Dorsolateral prefrontal cortex (tissue), 120 donors: ENCODE measurements at regions of chr12 and their contacts with region 1.

Region 1: GRCh38 chr12:54958048-54958658 is 26.4 kb downstream of the TESPA1 start:
- DNase-seq: peak in 4 of 10 donors; percentile 28 to 64 (median 38)
- H3K4me3 ChIP-seq: no peak overlapping the region
- H3K27ac ChIP-seq: peak overlapping the region in 3 of 59 donors; percentile 3 to 17 (median 16)
- H3K27me3 ChIP-seq: peaks cover 0 to 4% (median 0%) of the 10 kb centered on the region in 45 donors
- CTCF ChIP-seq: peak; percentile 67 to 99 (median 86)

Region 2: DNA sequence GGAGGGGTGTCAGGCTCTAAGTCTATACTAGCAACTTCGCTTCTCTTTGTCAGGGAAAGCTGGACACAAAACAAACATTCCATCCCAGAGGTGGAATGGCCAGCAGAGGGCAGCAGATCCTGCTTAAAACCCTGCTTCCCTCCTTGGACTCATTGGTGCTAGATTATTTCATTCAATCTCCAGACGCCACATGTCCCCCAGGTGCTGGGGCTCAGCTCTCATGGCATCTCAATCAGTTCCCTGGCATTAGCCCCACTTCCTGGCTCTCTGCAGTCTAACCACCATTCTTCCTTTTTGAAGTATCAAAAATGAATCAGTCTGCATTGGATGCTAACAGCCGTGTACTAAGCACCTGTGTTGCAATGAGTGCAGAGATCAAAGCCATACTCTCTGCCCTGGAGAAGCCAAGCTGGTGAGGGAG is 361.6 kb before region 1 on chr12:
- intact Hi-C with region 1: loop called in 1 of 2 experiments (anchors 10 kb)
- DNase-seq: peak; percentile 56 to 79 (median 64)
- H3K4me3 ChIP-seq: no peak overlapping the region
- H3K27ac ChIP-seq: no peak overlapping the region
- H3K27me3 ChIP-seq: peaks cover 0 to 6% (median 0%) of the 10 kb centered on the region in 45 donors
- CTCF ChIP-seq: peak; percentile 52 to 88 (median 80)

Region 3: GRCh38 chr12:54701940-54702592 is 256.1 kb before region 1 on chr12:
- intact Hi-C with region 1: loop called in 1 of 2 experiments (anchors 1 kb)
- DNase-seq: no peak
- H3K4me3 ChIP-seq: no peak overlapping the region
- H3K27ac ChIP-seq: no peak overlapping the region
- H3K27me3 ChIP-seq: no peaks in the 10 kb centered on the region
- CTCF ChIP-seq: peak; percentile 26 to 89 (median 72)

Region 4: DNA sequence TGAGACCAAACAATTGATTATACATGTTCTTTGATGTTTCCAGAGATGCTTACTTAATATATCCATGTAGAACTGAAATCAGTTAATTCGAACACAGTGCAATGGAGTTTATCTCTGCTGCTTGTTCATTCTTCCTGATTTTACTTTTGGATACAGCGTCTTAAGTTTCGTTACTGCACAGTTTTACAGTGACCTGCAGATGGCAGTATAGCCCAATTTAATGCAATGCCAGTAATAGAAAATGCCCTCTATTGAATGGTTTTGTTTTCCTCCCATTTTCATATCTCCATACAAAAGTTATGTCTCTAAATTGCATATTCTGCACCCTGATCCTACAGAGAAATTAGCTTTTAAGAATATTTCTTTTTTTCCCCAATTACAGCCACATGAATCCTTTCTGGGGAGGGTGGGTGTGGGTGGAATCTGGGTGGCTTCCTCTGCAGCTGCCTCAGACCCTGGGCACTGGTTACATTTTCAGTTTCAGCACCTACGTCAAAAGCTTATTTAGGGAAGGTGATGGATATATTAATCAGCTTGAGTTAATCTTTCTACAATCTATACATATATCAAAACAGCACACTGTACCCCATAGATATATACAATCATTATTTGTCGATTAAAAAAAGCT is 208.8 kb before region 1 on chr12:
- intact Hi-C with region 1: loop called (anchors 1 to 10 kb)
- DNase-seq: peak in 1 of 10 donors; percentile 5
- H3K4me3 ChIP-seq: no peak overlapping the region
- H3K27ac ChIP-seq: no peak overlapping the region
- H3K27me3 ChIP-seq: peaks cover 0 to 4% (median 0%) of the 10 kb centered on the region in 45 donors
- CTCF ChIP-seq: peak; percentile 70 to 92 (median 82)

Region 5: DNA sequence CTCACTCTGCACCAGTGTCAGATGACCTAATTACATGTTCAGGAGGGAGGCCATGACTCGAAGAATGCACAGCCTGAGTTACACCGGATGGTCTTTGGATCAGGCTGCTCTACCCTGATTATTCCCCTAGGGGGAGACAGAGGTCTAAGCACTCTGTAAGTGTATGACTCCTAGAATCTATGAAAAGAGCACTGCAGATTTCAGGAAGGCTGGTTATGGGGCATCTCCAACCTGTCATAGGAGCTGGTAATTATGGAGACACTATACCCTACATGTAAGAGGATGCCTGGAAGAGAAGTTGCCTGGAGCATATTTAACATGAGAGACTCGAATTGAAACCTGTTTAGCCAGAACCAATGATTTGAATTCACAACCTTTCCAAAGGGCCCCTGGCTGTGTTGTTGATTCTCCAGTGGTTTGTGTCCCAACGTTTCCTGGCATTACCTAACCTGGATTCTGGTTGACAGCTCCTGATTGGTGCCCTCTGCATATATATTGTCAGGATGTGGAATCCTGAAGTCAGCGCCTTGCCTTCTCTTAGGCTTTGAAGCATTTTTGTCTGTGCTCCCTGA is 104.1 kb before region 1 on chr12 and contains the start of gene MUCL1:
- intact Hi-C with region 1: loop called (anchors 5 to 10 kb)
- DNase-seq: peak in 2 of 10 donors; percentile 29 to 46
- H3K4me3 ChIP-seq: no peak within 1 kb of the TSS
- H3K27ac ChIP-seq: no peak within 1 kb of the TSS
- H3K27me3 ChIP-seq: no peaks in the 10 kb centered on the region
- CTCF ChIP-seq: peak in 55 of 56 donors; percentile 36 to 85 (median 71)
- total RNA-seq, gene MUCL1: 0.81 to 3.7 (median 1.7) TPM in 34 of 120 experiments, not detected in the others